B cell (primary cell): ENCODE measurements at regions of chr18 and their contacts with region 1.

Region 1: GRCh38 chr18:35972197-35973052 is at the start of gene RMP24:
- DNase-seq: peak; percentile 94
- ATAC-seq: peak; percentile 94
- H3K4me3 ChIP-seq: peak within 1 kb of the TSS; percentile 85 to 98 (median 94)
- H3K4me3 Mint-ChIP-seq: peak within 1 kb of the TSS; percentile 91
- H3K27ac ChIP-seq: peak within 1 kb of the TSS; percentile 79 to 90
- H3K27ac Mint-ChIP-seq: peak within 1 kb of the TSS; percentile 93
- H3K4me1 ChIP-seq: peaks cover 20 to 38% of the 10 kb centered on the region in 2 donors
- H3K4me1 Mint-ChIP-seq: peaks cover 53% of the 10 kb centered on the region
- H3K27me3 ChIP-seq: no peaks in the 10 kb centered on the region
- H3K27me3 Mint-ChIP-seq: no peaks in the 10 kb centered on the region
- CTCF ChIP-seq: no peak

Region 2: DNA sequence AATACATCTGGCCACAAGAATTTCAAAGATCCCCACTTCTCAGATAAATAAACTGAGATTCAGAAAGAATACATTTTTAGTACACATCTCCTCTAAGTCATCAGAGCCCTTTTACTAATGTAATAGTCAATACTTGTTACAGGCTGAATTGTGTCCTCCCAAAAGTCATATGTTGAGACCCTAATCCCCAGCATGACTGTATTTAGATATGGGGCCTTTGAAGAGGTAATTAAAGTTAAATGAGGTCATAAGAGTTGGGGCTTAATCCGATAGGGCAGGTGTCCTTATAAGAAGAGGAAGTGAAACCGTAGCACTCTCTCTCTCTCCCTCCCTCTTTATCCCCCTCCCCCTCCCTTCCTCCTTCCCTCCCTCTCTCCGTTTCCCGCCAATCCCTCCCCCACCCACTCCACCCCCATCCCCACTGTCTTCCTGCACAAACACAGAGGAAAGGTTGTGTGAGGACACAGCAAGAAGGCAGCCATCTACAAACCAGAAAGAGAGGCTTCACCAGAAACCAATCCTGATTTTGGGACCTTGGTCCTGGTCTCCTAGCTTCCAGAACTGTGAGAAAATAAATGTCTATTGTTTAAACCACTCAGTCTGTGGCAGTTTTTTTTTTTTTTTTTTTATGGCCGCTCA is 798.2 kb before region 1 on chr18:
- CTCF ChIA-PET with region 1: no interaction called
- POLR2A ChIA-PET with region 1: no interaction called
- intact Hi-C with region 1: loop called (anchors 10 kb)
- DNase-seq: peak; percentile 78
- ATAC-seq: peak; percentile 98
- H3K4me3 ChIP-seq: no peak overlapping the region
- H3K4me3 Mint-ChIP-seq: peak overlapping the region; percentile 59
- H3K27ac ChIP-seq: peak overlapping the region; percentile 37 to 69
- H3K27ac Mint-ChIP-seq: peak overlapping the region; percentile 77
- H3K4me1 ChIP-seq: peaks cover 14 to 23% of the 10 kb centered on the region in 2 donors
- H3K4me1 Mint-ChIP-seq: peaks cover 23% of the 10 kb centered on the region
- H3K27me3 ChIP-seq: no peaks in the 10 kb centered on the region
- H3K27me3 Mint-ChIP-seq: no peaks in the 10 kb centered on the region
- CTCF ChIP-seq: no peak

Region 3: GRCh38 chr18:35343936-35344735 is 628.3 kb before region 1 on chr18 and contains the start of gene ZNF24:
- CTCF ChIA-PET with region 1: no interaction called
- POLR2A ChIA-PET with region 1: no interaction called
- intact Hi-C with region 1: loop called (anchors 1 kb)
- DNase-seq: peak; percentile 96
- ATAC-seq: peak; percentile 84
- H3K4me3 ChIP-seq: peak within 1 kb of the TSS; percentile 84 to 99 (median 97)
- H3K4me3 Mint-ChIP-seq: peak within 1 kb of the TSS; percentile 100
- H3K27ac ChIP-seq: peak within 1 kb of the TSS; percentile 99
- H3K27ac Mint-ChIP-seq: peak within 1 kb of the TSS; percentile 99
- H3K4me1 ChIP-seq: peaks cover 24 to 35% of the 10 kb centered on the region in 2 donors
- H3K4me1 Mint-ChIP-seq: peaks cover 64% of the 10 kb centered on the region
- H3K27me3 ChIP-seq: no peaks in the 10 kb centered on the region
- H3K27me3 Mint-ChIP-seq: no peaks in the 10 kb centered on the region
- CTCF ChIP-seq: no peak
- total RNA-seq, gene ZNF24: 80.1 and 83.7 TPM in 2 replicates

Region 4: GRCh38 chr18:35497370-35498197 is 474.8 kb before region 1 on chr18 and contains the start of gene INO80C:
- CTCF ChIA-PET with region 1: no interaction called
- POLR2A ChIA-PET with region 1: interaction called, 12 read pairs
- intact Hi-C with region 1: loop called (anchors 1 kb)
- DNase-seq: peak; percentile 97
- ATAC-seq: peak; percentile 89
- H3K4me3 ChIP-seq: peak within 1 kb of the TSS; percentile 64 to 98 (median 94)
- H3K4me3 Mint-ChIP-seq: peak within 1 kb of the TSS; percentile 94
- H3K27ac ChIP-seq: peak within 1 kb of the TSS; percentile 92 to 95
- H3K27ac Mint-ChIP-seq: peak within 1 kb of the TSS; percentile 99
- H3K4me1 ChIP-seq: peaks cover 21 to 25% of the 10 kb centered on the region in 2 donors
- H3K4me1 Mint-ChIP-seq: peaks cover 53% of the 10 kb centered on the region
- H3K27me3 ChIP-seq: no peaks in the 10 kb centered on the region
- H3K27me3 Mint-ChIP-seq: no peaks in the 10 kb centered on the region
- CTCF ChIP-seq: no peak
- total RNA-seq, gene INO80C: 37.9 and 38.5 TPM in 2 replicates

Region 5: GRCh38 chr18:35949903-35950627 is 22.4 kb before region 1 on chr18:
- CTCF ChIA-PET with region 1: interaction called, 5 read pairs
- POLR2A ChIA-PET with region 1: interaction called, 4 read pairs
- intact Hi-C with region 1: loop called (anchors 2 kb)
- DNase-seq: peak; percentile 77
- ATAC-seq: peak; percentile 86
- H3K4me3 ChIP-seq: peak overlapping the region; percentile 11 to 56 (median 49)
- H3K4me3 Mint-ChIP-seq: peak overlapping the region; percentile 81
- H3K27ac ChIP-seq: no peak overlapping the region
- H3K27ac Mint-ChIP-seq: no peak overlapping the region
- H3K4me1 ChIP-seq: peaks cover 7 to 8% of the 10 kb centered on the region in 2 donors
- H3K4me1 Mint-ChIP-seq: peaks cover 10% of the 10 kb centered on the region
- H3K27me3 ChIP-seq: peaks cover 0 to 10% (median 7%) of the 10 kb centered on the region in 4 experiments
- H3K27me3 Mint-ChIP-seq: peaks cover 32% of the 10 kb centered on the region
- CTCF ChIP-seq: peak; percentile 99

Region 6: DNA sequence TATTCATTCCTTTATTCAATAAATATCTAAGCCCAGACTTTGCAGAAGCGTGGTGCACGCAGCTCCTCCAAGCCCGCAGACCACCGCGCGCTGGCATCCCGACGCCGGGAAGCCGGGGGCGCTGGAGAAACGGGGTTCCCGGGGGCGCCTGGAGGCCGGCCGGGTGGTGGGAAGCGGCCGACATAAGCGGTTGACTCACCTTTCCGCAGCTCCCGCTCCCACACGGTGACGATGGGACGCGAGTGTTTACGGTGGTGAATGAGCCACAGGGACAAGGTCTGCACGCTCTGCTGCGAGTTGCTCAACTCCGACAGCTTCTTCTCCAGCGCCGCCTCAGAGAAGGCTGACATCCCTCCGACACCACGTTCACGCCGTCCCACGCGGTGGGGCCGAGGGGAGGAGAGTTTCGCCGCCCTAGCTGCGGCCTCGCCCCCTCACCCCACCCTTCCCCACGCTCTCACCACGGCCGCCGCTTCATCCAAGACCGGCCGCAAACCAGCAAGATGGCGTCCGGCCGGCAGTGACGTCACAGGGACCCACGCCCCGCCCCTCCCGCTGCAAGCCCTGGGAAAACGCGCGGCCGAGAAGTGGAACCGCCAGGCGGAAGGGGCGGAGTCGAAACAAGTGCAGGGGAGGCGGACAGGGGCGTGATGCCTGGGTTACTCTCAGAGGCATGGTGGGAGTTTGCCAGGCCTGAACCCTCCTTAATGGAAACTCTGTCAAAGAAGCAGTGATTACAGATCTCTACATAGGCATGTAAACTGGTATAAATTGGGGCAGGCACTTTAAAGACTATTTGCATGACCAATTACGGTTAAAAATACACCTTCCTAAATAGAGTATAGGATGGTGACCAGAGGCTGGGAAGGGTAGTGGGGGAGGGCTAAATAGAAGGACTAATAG is 94.9 kb after region 1 on chr18 and contains the start of gene RPRD1A:
- CTCF ChIA-PET with region 1: no interaction called
- POLR2A ChIA-PET with region 1: no interaction called
- intact Hi-C with region 1: loop called (anchors 1 kb)
- DNase-seq: peak; percentile 98
- ATAC-seq: peak; percentile 90
- H3K4me3 ChIP-seq: peak within 1 kb of the TSS; percentile 74 to 98 (median 97)
- H3K4me3 Mint-ChIP-seq: peak within 1 kb of the TSS; percentile 87
- H3K27ac ChIP-seq: peak within 1 kb of the TSS; percentile 83 to 85
- H3K27ac Mint-ChIP-seq: peak within 1 kb of the TSS; percentile 95
- H3K4me1 ChIP-seq: peaks cover 29 to 34% of the 10 kb centered on the region in 2 donors
- H3K4me1 Mint-ChIP-seq: peaks cover 42% of the 10 kb centered on the region
- H3K27me3 ChIP-seq: no peaks in the 10 kb centered on the region
- H3K27me3 Mint-ChIP-seq: no peaks in the 10 kb centered on the region
- CTCF ChIP-seq: no peak
- total RNA-seq, gene RPRD1A: 62.6 and 66.5 TPM in 2 replicates

Region 7: DNA sequence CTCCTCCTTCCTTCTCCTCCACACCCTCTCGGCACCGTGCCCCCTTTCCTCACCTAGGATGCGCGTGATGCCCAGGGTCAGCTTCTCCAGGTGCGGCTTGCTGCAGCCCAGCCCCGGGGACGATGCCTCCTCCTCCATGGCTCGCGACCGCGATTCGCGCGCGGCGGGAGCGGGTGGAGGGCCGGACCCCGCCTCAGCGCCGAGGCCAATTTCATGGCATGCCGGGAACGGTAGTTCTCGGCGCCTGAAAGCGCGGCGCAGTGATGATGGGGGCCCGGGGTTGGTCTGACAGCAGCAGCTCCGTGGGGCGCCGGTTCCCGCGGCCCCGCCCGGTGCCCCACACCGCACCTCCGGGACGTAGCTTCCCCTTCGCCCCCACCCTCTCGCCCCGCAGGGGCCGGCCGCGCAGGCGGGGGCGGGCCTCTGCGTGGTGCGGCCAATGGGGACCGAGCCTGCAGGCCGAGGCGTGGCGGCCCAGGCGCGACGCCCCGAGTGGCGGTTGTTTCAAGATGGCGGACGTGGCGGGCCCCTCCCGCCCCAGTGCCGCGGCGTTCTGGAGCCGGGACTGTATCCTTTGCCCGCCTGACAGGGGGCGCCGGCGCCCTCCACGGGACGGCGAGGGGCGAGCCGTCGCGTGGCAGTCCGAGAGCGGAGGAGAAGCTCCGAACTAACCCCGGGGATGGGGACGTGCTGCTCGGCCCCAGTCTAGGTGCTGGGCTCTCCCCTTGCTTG is 856.4 kb after region 1 on chr18 and contains the starts of genes KIAA1328 and TPGS2:
- CTCF ChIA-PET with region 1: no interaction called
- POLR2A ChIA-PET with region 1: no interaction called
- intact Hi-C with region 1: loop called (anchors 2 kb)
- DNase-seq: peak; percentile 93
- ATAC-seq: peak; percentile 88
- H3K4me3 ChIP-seq: peak within 1 kb of the TSS; percentile 69 to 99 (median 79)
- H3K4me3 Mint-ChIP-seq: peak within 1 kb of the TSS; percentile 87
- H3K27ac ChIP-seq: peak within 1 kb of the TSS; percentile 77 to 81
- H3K27ac Mint-ChIP-seq: peak within 1 kb of the TSS; percentile 87
- H3K4me1 ChIP-seq: peaks cover 19 to 22% of the 10 kb centered on the region in 2 donors
- H3K4me1 Mint-ChIP-seq: peaks cover 37% of the 10 kb centered on the region
- H3K27me3 ChIP-seq: no peaks in the 10 kb centered on the region
- H3K27me3 Mint-ChIP-seq: no peaks in the 10 kb centered on the region
- CTCF ChIP-seq: peak; percentile 57
- total RNA-seq, gene KIAA1328: 22.1 and 24.3 TPM in 2 replicates
- total RNA-seq, gene TPGS2: 50.9 and 53.7 TPM in 2 replicates